ENCODE measurements at regions of chr7 and their contacts with region 1.

Region 1: DNA sequence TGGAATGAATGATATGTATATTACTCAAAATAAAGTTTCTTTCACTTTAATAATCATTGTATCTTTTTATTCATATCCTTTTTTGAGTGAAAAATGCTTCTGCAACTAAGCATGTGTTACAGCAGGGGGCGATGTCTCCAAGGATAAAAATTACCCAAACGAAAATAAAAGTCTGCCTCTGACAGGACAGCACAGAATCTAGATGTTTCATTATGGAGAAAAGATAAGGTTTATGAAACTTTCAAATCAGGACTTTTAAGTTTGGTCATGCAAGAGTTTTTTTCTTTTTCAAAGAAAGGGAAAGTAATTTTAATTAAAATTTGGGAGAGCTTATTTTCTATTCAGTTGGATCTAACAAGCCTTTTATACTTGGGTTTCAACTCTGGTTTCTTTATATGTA is 48.4 kb downstream of the TES start:
- DNase-seq: peak; percentile 79
- ATAC-seq: peak; percentile 75
- H3K4me3 ChIP-seq: no peak overlapping the region
- H3K27ac ChIP-seq: peak overlapping the region; percentile 49; the same call in 1 of the 2 replicates
- H3K4me1 ChIP-seq: peaks cover 11% of the 10 kb centered on the region; the same call in 1 of the 2 replicates
- H3K27me3 ChIP-seq: no peaks in the 10 kb centered on the region
- CTCF ChIP-seq: peak; percentile 91
- POLR2A ChIP-seq: 0 out of 2 replicates have a peak, but pooled peaks have one; percentile 39
- RAD21 ChIP-seq: peak; percentile 95

Region 2: DNA sequence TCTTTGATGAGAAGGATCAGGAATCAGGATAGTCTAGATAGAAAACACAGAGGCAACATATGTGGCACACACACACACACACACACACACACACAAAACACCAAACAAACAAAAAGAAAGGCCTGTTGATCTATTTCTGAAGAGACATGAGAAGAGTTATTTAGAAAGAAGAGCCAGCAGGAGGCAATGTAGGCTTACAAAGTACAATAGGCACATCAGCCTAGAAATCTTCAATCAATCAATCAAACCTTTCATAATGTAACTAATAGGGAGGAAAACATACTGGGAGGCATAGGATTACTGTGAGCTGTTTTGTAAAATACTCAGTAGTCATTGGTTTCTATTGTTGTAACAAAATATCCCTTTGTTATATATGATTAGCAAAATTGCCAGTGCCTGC is 95.7 kb before region 1 on chr7:
- CTCF ChIA-PET with region 1: no interaction called
- POLR2A ChIA-PET with region 1: no interaction called
- dilution Hi-C with region 1: no loop called
- in situ Hi-C with region 1: no loop called
- intact Hi-C with region 1: no loop called
- DNase-seq: no peak
- ATAC-seq: no peak
- H3K4me3 ChIP-seq: no peak overlapping the region
- H3K27ac ChIP-seq: no peak overlapping the region
- H3K4me1 ChIP-seq: peaks cover 3% of the 10 kb centered on the region; the same call in 1 of the 2 replicates
- H3K27me3 ChIP-seq: no peaks in the 10 kb centered on the region; the same call in 1 of the 2 replicates
- CTCF ChIP-seq: no peak; the same call in 1 of the 2 replicates
- POLR2A ChIP-seq: no peak
- RAD21 ChIP-seq: peak; percentile 27; the same call in 1 of the 2 replicates

Region 3: DNA sequence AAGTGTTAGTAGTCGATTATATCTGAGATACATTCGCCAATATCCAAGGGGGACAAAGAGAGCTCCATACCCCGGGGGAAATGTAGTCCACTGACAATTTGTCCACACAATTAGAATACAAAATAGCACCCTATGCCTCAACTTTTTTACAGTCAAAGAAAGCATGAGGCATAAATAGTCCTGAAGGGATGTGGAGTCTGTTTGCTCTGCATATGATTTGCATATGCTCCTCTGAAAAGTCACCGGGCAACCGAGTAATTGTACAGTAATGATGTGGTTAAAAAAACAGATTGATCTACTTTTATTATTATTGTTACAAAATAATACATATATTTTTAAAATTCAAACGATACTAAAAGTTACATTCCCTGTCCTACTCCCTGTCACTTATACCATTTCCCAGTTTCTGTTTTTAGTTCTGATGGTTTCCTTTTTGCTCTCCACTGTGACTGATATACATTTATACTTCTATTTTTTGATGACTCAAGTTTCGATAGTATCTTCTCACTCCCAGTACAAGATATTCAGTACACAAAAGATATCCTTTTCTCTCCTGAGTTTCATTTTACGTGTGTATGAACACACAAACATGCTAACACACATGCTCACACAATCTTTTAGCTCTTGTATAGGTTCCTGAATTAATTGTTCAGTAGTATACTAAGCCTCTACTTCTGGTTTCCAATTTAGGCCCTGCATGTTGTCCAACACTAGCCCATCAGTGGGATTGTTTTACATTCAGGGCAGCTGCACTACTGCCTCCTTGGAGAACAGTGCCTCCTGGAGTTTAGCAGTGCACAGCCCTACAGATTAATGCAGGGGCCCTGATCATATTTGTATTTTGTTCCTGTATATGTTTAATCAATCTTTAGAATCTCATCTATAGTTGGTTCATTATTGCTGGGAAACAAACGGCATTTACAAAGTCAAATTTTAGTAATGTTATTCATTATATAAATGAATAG is 82.5 kb after region 1 on chr7:
- CTCF ChIA-PET with region 1: no interaction called
- POLR2A ChIA-PET with region 1: no interaction called
- dilution Hi-C with region 1: no loop called
- in situ Hi-C with region 1: no loop called
- intact Hi-C with region 1: loop called (anchors 2 kb)
- DNase-seq: no peak
- ATAC-seq: 0 out of 2 replicates have a peak, but pooled peaks have one; percentile 42
- H3K4me3 ChIP-seq: no peak overlapping the region
- H3K27ac ChIP-seq: no peak overlapping the region
- H3K4me1 ChIP-seq: peaks cover 11% of the 10 kb centered on the region
- H3K27me3 ChIP-seq: no peaks in the 10 kb centered on the region
- CTCF ChIP-seq: no peak; the same call in 1 of the 2 replicates
- POLR2A ChIP-seq: no peak
- RAD21 ChIP-seq: no peak

Measured in IMR-90 (cell line).